ENCODE measurements at regions of chr6 and their contacts with region 1.

Region 1: DNA sequence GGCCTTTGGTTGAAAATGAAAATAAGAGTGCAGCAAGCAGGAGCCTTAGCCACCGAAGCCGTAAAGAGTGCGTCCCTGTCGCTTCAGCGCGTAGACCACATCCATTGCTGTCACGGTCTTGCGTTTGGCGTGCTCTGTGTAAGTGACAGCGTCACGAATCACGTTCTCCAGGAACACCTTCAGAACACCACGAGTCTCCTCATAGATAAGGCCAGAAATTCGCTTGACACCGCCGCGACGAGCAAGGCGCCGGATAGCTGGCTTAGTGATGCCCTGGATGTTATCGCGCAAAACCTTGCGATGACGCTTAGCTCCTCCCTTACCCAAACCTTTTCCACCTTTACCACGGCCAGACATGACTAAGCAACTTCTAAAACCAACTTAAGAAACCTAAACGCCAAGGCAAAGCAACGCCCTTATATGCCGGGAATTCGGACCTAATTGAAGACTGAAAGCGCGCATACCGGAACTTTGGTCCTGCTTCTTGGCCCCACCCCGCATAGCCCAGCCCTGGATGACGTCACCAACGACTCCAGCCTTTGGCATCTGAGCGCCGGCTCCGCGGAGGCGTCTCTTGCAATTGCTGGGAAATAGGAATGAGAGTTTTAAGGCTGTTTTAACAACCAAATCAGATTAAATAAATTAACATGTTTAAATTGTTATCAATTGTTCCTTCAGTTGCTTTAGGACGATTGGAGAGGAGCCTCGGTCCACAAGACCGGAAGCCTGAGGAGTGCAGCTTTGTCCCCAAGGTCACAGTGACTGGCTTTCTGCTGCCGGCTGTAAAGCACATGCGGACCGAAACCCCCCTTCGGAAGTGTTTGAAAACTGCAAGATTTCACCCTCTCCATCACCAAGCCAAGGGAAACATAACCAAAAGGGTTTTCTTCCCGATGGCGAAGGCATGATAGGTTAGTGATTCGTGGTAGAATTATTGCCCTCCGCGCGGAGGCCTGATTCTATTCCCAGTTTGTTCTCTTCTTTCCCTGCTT is 79.6 kb upstream of the BTN3A2 start:
- DNase-seq: peak; percentile 87
- ATAC-seq: peak; percentile 79
- H3K4me3 Mint-ChIP-seq: peak overlapping the region; percentile 72
- H3K27ac Mint-ChIP-seq: peak overlapping the region; percentile 92
- H3K4me1 Mint-ChIP-seq: peaks cover 37% of the 10 kb centered on the region
- H3K27me3 Mint-ChIP-seq: peaks cover 3% of the 10 kb centered on the region

Region 2: GRCh38 chr6:26054857-26055669 is 230.4 kb before region 1 on chr6:
- POLR2A ChIA-PET with region 1: interaction called, 10 read pairs
- DNase-seq: peak; percentile 81
- ATAC-seq: peak; percentile 69
- H3K4me3 Mint-ChIP-seq: peak overlapping the region; percentile 96
- H3K27ac Mint-ChIP-seq: peak overlapping the region; percentile 100
- H3K4me1 Mint-ChIP-seq: peaks cover 32% of the 10 kb centered on the region
- H3K27me3 Mint-ChIP-seq: no peaks in the 10 kb centered on the region

Region 3: DNA sequence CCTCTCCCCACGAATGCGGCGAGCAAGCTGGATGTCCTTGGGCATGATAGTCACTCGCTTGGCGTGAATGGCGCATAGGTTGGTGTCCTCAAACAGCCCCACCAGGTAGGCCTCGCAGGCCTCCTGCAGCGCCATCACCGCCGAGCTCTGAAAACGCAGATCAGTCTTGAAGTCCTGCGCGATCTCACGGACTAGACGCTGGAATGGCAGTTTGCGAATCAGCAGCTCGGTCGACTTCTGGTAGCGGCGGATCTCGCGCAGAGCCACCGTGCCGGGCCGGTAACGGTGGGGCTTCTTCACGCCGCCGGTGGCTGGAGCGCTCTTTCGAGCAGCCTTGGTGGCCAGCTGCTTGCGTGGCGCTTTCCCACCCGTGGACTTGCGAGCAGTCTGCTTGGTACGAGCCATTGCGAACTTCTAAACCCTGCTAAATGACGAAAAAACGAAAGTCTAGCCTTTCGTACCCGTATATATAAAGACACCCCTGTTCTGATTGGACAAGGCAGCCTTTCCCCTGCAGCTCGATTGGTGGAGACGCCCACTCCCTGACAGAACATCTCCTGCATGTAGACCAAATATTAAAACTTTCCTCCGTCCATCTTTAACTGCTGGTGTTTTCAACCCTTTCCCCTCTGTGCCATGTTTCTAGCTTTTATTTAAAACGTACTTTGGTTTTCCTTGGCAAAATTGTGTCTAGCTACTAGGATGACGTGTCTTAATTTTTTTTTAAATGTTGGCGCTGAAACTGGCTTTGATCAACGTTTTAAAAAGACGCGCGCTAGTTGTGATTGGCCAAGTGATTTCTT is 88.4 kb before region 1 on chr6:
- POLR2A ChIA-PET with region 1: interaction called, 67 read pairs
- DNase-seq: peak; percentile 83
- ATAC-seq: peak; percentile 44
- H3K4me3 Mint-ChIP-seq: peak overlapping the region; percentile 87
- H3K27ac Mint-ChIP-seq: peak overlapping the region; percentile 96
- H3K4me1 Mint-ChIP-seq: peaks cover 48% of the 10 kb centered on the region
- H3K27me3 Mint-ChIP-seq: no peaks in the 10 kb centered on the region

Region 4: GRCh38 chr6:26240154-26241032 is 45.0 kb before region 1 on chr6:
- POLR2A ChIA-PET with region 1: interaction called, 74 read pairs
- DNase-seq: peak; percentile 81
- ATAC-seq: peak; percentile 82
- H3K4me3 Mint-ChIP-seq: peak overlapping the region; percentile 85
- H3K27ac Mint-ChIP-seq: peak overlapping the region; percentile 98
- H3K4me1 Mint-ChIP-seq: peaks cover 36% of the 10 kb centered on the region
- H3K27me3 Mint-ChIP-seq: no peaks in the 10 kb centered on the region

Region 5: DNA sequence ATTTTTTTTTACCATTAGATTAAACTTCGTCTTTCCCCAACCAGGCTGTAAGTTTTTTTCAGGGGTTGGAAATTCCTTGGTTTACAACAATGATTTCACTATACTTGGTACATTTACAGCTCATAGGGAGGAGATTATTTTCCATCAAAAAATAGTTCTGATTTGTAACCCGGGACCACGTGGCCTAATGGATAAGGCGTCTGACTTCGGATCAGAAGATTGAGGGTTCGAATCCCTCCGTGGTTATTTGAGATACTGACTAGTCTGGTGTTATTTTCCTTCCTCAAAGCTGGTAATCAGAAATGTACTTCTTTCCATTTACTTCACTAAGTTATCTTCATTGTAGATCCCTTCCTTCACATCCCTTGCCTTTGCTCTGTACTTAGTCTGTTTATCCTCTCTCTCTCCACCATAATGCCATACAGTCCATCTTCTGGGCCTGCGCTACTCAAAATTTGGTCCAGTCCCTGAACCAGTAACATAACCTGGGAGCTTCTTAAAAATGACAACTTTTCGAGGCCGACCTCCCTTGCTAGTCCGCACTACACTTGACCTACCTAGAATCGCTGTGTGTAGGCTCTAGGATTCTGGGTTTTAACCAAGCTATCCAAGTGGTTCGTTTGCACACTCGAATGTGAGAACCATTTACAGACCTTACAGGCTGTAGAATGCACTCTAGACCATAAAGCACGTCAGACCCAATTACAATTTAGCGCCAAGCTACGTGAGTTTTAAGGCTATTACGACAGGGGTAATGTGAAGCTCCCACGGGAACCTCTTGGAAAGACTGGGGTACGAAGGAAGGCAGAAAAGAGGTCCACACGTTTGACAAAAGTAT is 37.4 kb after region 1 on chr6:
- POLR2A ChIA-PET with region 1: interaction called, 11 read pairs
- DNase-seq: no peak
- ATAC-seq: peak; percentile 46
- H3K4me3 Mint-ChIP-seq: peak overlapping the region; percentile 87
- H3K27ac Mint-ChIP-seq: peak overlapping the region; percentile 82
- H3K4me1 Mint-ChIP-seq: peaks cover 39% of the 10 kb centered on the region
- H3K27me3 Mint-ChIP-seq: peaks cover 23% of the 10 kb centered on the region

Region 6: DNA sequence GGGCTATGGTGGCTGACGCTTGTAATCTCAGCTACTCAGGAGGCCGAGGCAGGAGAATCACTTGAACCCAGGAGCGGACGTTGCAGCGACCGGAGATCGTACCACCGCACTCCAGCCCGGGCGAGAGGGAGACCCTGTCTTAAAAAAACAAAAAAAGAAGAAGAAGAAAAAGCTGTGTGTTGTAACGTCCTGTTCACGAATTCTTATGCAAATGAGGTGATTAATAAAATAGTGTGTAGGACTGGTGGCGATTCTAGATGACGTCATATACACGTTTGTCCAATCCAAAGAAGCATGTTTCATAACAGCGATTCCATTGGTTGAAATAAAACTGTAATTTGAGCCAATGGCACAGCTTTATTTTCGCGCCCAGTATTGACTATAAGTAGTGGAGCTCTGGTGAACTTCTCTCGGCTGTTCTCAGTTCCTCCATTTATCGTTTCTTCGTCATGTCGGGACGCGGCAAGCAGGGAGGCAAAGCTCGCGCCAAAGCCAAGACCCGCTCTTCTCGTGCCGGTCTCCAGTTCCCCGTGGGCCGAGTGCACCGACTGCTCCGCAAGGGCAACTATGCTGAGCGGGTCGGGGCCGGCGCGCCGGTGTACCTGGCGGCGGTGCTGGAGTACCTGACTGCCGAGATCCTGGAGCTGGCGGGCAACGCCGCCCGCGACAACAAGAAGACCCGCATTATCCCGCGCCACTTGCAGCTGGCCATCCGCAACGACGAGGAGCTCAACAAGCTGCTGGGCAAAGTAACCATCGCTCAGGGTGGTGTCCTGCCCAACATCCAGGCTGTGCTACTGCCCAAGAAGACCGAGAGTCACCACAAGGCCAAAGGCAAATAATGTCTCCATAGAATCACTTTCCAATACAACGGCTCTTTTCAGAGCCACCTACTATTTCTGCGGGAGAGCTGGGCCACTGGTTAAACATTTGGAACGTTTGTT is 1579.7 kb after region 1 on chr6:
- POLR2A ChIA-PET with region 1: interaction called, 10 read pairs
- DNase-seq: peak; percentile 83
- ATAC-seq: peak; percentile 56
- H3K4me3 Mint-ChIP-seq: peak overlapping the region; percentile 99
- H3K27ac Mint-ChIP-seq: peak overlapping the region; percentile 100
- H3K4me1 Mint-ChIP-seq: peaks cover 57% of the 10 kb centered on the region
- H3K27me3 Mint-ChIP-seq: no peaks in the 10 kb centered on the region